CD14-positive monocyte (primary cell): ENCODE measurements at regions of chr11 and their contacts with region 1.

Region 1: GRCh38 chr11:36300651-36301050 is 4.6 kb downstream of the PRR5L start:
- DNase-seq: no peak
- H3K4me3 ChIP-seq: no peak overlapping the region
- H3K4me3 Mint-ChIP-seq: no peak overlapping the region
- H3K27ac ChIP-seq: no peak overlapping the region
- H3K27ac Mint-ChIP-seq: no peak overlapping the region
- H3K4me1 ChIP-seq: peaks cover 24 to 29% of the 10 kb centered on the region in 2 donors
- H3K4me1 Mint-ChIP-seq: peaks cover 21% of the 10 kb centered on the region
- H3K27me3 ChIP-seq: no peaks in the 10 kb centered on the region
- H3K27me3 Mint-ChIP-seq: no peaks in the 10 kb centered on the region
- CTCF ChIP-seq: no peak

Region 2: DNA sequence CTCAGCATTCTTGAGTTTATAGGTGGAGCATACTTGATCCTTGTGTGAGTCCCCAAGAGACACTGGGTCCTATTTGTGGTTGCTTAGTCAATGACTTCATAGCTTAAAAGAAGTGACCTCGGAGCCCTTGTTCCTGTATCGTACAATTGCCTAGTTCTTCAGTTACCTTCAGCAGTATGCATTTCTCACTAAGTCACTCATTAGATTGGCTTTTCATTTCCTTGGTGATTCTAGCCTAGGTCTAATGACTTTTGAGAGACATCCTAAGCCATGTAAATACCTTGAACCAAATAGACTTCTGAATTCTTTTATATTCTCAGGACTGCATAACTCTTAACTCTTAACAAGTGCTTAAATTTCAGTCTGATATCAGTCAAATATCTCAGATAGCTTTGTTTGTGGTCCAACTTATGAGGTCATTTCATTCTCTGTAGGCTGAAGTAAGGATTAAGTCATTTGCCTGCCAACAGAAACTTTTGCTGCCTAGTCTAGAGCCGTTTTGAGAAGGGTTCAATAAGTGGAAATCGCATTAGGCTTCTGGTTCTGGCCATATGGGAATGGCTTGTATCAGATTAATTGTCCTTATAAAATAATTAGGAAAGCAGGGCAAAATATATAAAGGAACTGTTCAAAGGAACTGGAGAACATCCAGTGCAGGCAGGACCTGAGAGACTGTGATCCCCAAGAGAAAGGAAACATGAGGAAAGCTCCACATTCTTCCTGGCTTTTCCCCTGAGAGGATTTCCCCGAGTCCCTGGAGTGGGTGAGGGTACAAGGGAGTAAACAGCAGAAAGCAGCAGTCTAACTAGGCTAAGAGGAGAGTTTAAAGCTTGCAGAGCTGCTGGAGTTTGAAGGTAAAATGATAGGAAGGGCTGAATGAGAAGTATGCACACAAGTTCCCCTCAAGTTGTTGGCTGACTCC is 169.5 kb after region 1 on chr11:
- intact Hi-C with region 1: loop called in 1 of 2 experiments (anchors 5 kb)
- DNase-seq: no peak
- H3K4me3 ChIP-seq: no peak overlapping the region
- H3K4me3 Mint-ChIP-seq: no peak overlapping the region
- H3K27ac ChIP-seq: no peak overlapping the region
- H3K27ac Mint-ChIP-seq: no peak overlapping the region
- H3K4me1 ChIP-seq: peaks cover 0 to 9% of the 10 kb centered on the region in 2 donors
- H3K4me1 Mint-ChIP-seq: peaks cover 10% of the 10 kb centered on the region
- H3K27me3 ChIP-seq: no peaks in the 10 kb centered on the region
- H3K27me3 Mint-ChIP-seq: peaks cover 0 to 3% (median 2%) of the 10 kb centered on the region in 3 donors
- CTCF ChIP-seq: no peak